B cell (primary cell): ENCODE measurements at regions of chr9 and their contacts with region 1.

Region 1: GRCh38 chr9:19456996-19457692 is 48.3 kb downstream of the ACER2 start:
- DNase-seq: peak; percentile 80
- ATAC-seq: peak; percentile 95
- H3K4me3 ChIP-seq: peak overlapping the region in 1 of 5 experiments; percentile 19
- H3K4me3 Mint-ChIP-seq: peak overlapping the region; percentile 23
- H3K27ac ChIP-seq: no peak overlapping the region
- H3K27ac Mint-ChIP-seq: no peak overlapping the region
- H3K4me1 ChIP-seq: peaks cover 7% of the 10 kb centered on the region in 2 donors
- H3K4me1 Mint-ChIP-seq: peaks cover 13% of the 10 kb centered on the region
- H3K27me3 ChIP-seq: no peaks in the 10 kb centered on the region
- H3K27me3 Mint-ChIP-seq: no peaks in the 10 kb centered on the region
- CTCF ChIP-seq: peak; percentile 99

Region 2: DNA sequence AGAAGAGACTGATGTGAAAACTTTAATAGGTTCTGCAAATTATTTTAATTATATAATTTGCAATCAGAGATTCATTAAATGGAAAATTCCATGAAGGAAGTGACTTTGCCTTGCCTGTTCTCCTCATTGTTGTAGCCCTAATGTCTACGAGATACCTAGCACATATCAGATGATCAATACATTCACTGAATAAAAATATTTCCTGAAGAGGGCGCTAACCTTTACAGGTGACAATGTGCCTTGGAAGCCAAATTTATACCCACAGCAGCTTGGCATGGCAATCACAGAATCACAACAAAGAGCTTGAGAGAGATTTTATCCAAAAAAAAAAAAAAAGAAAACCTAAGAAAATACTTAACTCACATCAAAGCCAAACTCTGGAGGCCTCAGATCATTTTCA is 371.8 kb before region 1 on chr9:
- CTCF ChIA-PET with region 1: interaction called, 34 read pairs
- POLR2A ChIA-PET with region 1: no interaction called
- intact Hi-C with region 1: loop called (anchors 1 kb)
- DNase-seq: peak; percentile 30
- ATAC-seq: no peak
- H3K4me3 ChIP-seq: no peak overlapping the region
- H3K4me3 Mint-ChIP-seq: no peak overlapping the region
- H3K27ac ChIP-seq: no peak overlapping the region
- H3K27ac Mint-ChIP-seq: no peak overlapping the region
- H3K4me1 ChIP-seq: no peaks in the 10 kb centered on the region
- H3K4me1 Mint-ChIP-seq: no peaks in the 10 kb centered on the region
- H3K27me3 ChIP-seq: no peaks in the 10 kb centered on the region
- H3K27me3 Mint-ChIP-seq: no peaks in the 10 kb centered on the region
- CTCF ChIP-seq: peak; percentile 57

Region 3: DNA sequence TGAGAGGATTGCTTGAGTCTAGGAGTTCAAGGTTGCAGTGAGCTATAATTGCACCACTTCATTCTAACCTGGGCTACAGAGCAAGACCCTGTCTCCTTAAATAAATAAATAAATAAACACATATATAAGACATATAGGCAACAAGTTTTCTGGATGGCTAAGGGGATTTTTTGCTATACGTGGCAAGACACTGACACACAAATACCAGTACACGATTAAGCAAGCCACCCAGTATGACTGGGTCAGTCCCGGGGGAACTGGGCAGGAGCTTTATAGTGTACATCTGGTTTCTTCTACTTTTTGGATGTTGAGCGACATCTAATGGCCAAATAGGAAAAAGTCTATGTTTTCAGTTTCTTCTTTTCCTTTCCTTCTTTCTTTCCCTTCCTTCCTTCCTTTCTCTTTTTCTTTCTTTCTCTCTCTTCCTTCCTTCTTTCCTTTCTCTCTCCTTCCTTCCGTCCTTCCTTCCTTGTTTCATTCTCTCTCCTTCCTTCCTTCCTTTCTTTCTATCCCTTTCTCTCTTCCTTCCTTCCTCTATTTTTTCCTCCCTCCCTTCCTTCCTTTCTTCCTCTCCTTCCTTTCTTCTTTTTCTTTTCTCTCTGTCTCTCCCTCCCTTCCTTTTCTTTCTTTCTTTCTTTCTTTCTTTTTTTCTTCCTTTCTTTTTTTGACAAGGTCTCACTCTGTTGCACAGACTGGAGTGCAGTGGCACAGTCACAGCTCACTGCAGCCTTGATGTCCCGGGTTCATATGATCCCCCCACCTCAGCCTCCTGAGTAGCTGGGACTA is 282.8 kb before region 1 on chr9:
- CTCF ChIA-PET with region 1: interaction called, 15 read pairs
- POLR2A ChIA-PET with region 1: interaction called, 3 read pairs
- intact Hi-C with region 1: loop called (anchors 1 kb)
- DNase-seq: peak; percentile 61
- ATAC-seq: peak; percentile 87
- H3K4me3 ChIP-seq: no peak overlapping the region
- H3K4me3 Mint-ChIP-seq: no peak overlapping the region
- H3K27ac ChIP-seq: no peak overlapping the region
- H3K27ac Mint-ChIP-seq: no peak overlapping the region
- H3K4me1 ChIP-seq: peaks cover 0 to 4% of the 10 kb centered on the region in 2 donors
- H3K4me1 Mint-ChIP-seq: peaks cover 6% of the 10 kb centered on the region
- H3K27me3 ChIP-seq: no peaks in the 10 kb centered on the region
- H3K27me3 Mint-ChIP-seq: no peaks in the 10 kb centered on the region
- CTCF ChIP-seq: peak; percentile 83

Region 4: GRCh38 chr9:19379697-19380046 is 77.5 kb before region 1 on chr9:
- CTCF ChIA-PET with region 1: interaction called, 10 read pairs
- POLR2A ChIA-PET with region 1: interaction called, 3 read pairs
- intact Hi-C with region 1: loop called (anchors 2 kb)
- DNase-seq: no peak
- ATAC-seq: peak; percentile 41
- H3K4me3 ChIP-seq: peak overlapping the region; percentile 66 to 84 (median 81)
- H3K4me3 Mint-ChIP-seq: peak overlapping the region; percentile 98
- H3K27ac ChIP-seq: peak overlapping the region; percentile 87 to 93
- H3K27ac Mint-ChIP-seq: peak overlapping the region; percentile 98
- H3K4me1 ChIP-seq: peaks cover 19 to 20% of the 10 kb centered on the region in 2 donors
- H3K4me1 Mint-ChIP-seq: peaks cover 40% of the 10 kb centered on the region
- H3K27me3 ChIP-seq: no peaks in the 10 kb centered on the region
- H3K27me3 Mint-ChIP-seq: no peaks in the 10 kb centered on the region
- CTCF ChIP-seq: no peak

Region 5: GRCh38 chr9:19471737-19472648 is 14.8 kb after region 1 on chr9:
- CTCF ChIA-PET with region 1: interaction called, 101 read pairs
- POLR2A ChIA-PET with region 1: no interaction called
- intact Hi-C with region 1: no loop called
- DNase-seq: peak; percentile 61
- ATAC-seq: peak; percentile 68
- H3K4me3 ChIP-seq: peak overlapping the region in 3 of 5 experiments; percentile 11 to 29 (median 20)
- H3K4me3 Mint-ChIP-seq: peak overlapping the region; percentile 71
- H3K27ac ChIP-seq: no peak overlapping the region
- H3K27ac Mint-ChIP-seq: no peak overlapping the region
- H3K4me1 ChIP-seq: peaks cover 7 to 8% of the 10 kb centered on the region in 2 donors
- H3K4me1 Mint-ChIP-seq: peaks cover 3% of the 10 kb centered on the region
- H3K27me3 ChIP-seq: peaks cover 0 to 2% (median 0%) of the 10 kb centered on the region in 4 experiments
- H3K27me3 Mint-ChIP-seq: no peaks in the 10 kb centered on the region
- CTCF ChIP-seq: peak; percentile 75